BJ (cell line): ENCODE measurements at regions of chr19 and their contacts with region 1.

Region 1: DNA sequence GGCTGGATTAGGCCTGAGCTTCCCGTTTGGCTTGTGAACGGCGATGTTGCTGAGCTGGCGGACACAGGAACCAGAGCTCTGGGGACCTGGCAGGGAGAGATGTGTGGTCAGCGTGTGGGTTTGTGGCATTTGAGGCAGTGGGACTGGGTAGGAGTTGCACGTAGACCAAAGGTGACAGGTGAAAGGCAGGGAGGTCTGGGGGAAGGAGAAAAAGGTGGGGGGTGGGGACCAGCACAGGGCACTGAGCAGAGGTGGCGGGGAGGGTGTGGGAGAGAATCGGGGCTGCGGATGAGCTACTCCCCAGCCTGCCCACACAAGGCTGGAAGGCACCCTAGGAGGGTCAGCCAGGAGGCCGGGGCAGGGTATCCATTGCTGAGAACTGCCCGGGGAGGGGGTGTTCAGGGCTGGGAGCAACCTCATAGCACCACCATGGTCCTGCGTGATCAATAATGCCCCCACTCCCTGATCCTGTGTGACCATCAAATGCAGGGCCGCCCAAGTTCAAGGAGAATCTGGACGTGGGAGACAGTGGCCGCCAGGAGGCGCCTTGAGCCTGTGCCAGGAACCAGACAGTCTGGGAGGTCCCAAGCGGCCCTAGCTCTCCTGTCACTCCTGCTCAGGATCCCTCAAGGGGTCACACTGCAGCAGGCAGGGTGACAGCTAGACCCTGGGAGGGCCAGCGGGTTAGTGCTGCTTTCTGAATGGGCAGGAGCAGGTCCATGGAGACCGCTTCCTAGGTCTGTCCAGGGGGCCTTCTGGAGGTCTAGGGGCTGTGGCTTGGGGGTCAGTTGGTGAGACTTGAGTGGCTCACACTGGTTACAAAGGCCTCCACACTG is 12.8 kb upstream of the SELENOW start:
- DNase-seq: no peak
- H3K4me3 ChIP-seq: no peak overlapping the region
- H3K27me3 ChIP-seq: no peaks in the 10 kb centered on the region
- CTCF ChIP-seq: peak; percentile 80

Region 2: DNA sequence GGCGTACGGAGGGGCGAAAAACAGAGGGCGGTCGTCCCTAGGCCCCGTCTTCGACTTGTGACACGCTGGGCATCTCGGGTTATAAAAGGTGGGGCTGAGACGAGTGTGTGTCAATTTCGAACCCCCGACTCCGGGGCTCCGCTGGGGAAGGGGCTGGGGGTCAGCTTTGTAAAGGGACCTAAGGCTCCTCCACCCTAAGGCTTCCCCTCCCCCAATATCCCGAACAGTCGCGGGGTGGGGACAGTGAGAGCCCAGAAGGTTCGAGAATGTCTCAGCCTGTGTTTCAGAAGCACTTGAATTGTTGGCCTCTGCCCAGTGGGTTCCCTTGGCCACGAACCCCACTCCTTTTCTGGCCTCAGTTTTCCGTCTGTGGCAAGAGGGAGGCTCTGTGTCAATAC is 13.2 kb after region 1 on chr19:
- CTCF ChIA-PET with region 1: interaction called, 16 read pairs
- POLR2A ChIA-PET with region 1: no interaction called
- DNase-seq: no peak
- H3K4me3 ChIP-seq: peak overlapping the region; percentile 93
- H3K27me3 ChIP-seq: no peaks in the 10 kb centered on the region
- CTCF ChIP-seq: no peak

Region 3: DNA sequence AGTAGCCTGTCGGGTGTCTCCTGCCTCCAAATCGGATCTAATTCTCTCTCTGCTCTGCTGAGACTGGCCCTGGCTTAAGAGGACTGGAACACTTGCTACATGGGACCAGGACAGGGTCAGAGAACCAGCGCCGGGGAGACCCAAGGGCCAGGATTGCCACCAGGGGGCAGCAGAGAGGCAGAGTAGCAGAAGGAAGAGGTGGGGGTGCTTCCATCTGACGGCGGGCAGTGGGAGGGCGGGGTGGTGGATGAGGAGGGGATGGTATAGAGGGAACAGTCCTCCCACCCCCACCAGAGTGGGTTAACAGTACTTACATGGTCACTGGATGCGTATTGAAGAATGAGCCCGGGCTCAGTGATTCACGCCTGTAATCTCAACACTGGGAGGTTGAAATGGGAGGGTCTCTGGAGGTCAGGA is 24.7 kb after region 1 on chr19:
- CTCF ChIA-PET with region 1: interaction called, 18 read pairs
- POLR2A ChIA-PET with region 1: no interaction called
- DNase-seq: no peak
- H3K4me3 ChIP-seq: no peak overlapping the region
- H3K27me3 ChIP-seq: no peaks in the 10 kb centered on the region
- CTCF ChIP-seq: peak; percentile 98

Region 4: GRCh38 chr19:47991191-47991808 is 225.6 kb after region 1 on chr19:
- CTCF ChIA-PET with region 1: no interaction called
- POLR2A ChIA-PET with region 1: no interaction called
- DNase-seq: no peak
- H3K4me3 ChIP-seq: no peak overlapping the region
- H3K27me3 ChIP-seq: peaks cover 10% of the 10 kb centered on the region
- CTCF ChIP-seq: no peak